Activated B cell treated with CpG ODN at 0.5 μM for 24 hours (primary cell): ENCODE measurements at regions of chr1 and their contacts with region 1.

Region 1: DNA sequence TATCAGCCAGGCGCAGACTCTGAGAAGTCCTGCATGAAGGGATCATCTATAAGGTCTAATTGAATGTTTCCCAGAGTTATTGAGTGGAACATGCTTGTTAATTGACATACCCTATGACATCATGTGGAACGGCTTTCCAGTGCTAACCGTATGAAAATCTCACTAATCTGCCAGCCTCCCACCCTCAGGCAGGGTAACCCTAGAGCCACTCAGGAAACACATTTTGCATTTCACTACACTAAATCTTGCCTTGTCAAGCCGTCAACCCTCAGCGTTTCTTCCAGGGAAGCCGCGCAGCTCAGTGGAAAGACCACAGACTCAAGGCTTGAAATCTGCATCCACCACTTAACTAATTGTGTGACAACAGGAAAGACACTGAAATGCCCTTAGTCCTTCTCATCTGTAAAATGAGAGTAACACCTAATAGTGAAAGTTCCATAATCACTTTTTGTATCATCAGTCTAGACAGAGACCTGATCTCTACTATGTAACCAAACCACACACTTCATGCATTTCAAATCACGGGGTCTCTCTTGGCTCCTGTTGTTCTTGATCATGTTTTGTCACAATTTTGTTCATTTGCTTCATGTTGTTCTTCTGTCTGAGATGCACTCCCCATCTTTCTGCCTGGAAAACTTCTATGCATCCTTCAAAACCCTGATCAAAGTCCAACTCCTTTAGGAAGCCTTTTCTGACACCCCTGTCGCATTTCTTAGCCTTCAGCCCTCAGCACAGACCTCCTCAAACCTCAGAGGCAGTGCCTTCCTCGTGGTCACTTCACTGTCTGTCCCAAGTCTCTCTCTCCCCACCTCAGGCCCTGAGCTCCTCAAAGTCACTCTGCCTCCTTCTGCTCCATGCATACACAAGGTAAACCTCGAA is 246.5 kb downstream of the TOMM20 start:
- DNase-seq: no peak
- ATAC-seq: peak; percentile 70
- H3K4me3 Mint-ChIP-seq: peak overlapping the region; percentile 75
- H3K27ac Mint-ChIP-seq: peak overlapping the region; percentile 82
- H3K4me1 Mint-ChIP-seq: peaks cover 46% of the 10 kb centered on the region
- H3K27me3 Mint-ChIP-seq: no peaks in the 10 kb centered on the region
- CTCF ChIP-seq: no peak

Region 2: DNA sequence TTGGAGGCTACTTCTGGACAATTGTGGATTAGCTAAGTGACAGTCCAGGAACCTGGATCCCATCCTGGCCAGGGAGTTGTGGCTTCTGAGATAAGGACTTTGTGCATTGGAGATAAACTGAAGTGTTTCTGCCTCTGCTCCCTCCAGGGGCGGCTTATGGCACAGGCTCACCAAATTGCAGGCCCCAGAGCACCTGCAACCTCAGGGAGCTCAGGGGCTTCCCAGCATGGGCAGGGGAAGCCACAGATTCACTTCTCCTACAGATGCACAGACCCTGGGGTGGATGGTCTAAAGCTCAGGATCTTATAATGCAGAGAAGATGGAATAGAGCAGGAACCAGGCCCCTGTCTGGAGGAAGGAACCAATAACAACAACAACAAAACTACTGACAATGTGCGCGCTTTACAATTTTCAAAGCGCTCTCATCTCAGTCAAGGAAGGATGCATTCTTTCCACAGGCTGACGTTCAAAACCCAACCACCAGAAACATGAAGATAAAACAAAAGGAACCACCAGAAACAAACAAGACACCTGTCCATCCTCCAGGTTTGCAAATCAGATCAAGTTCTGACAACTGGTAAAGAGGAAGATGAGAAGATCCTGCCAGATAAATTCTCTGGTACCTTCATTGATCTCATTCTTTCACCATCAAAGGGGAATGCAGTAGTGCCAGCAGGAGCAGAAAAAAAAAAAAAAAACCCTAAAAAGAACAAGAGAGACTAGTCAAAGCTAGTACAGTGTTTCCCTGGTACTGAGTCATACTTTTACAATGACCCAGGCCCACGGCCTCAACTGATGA is 151.2 kb before region 1 on chr1:
- CTCF ChIA-PET with region 1: no interaction called
- POLR2A ChIA-PET with region 1: interaction called, 6 read pairs
- intact Hi-C with region 1: loop called (anchors 5 kb)
- DNase-seq: peak; percentile 37
- ATAC-seq: peak; percentile 81
- H3K4me3 Mint-ChIP-seq: peak overlapping the region; percentile 44
- H3K27ac Mint-ChIP-seq: peak overlapping the region; percentile 79
- H3K4me1 Mint-ChIP-seq: peaks cover 46% of the 10 kb centered on the region
- H3K27me3 Mint-ChIP-seq: no peaks in the 10 kb centered on the region
- CTCF ChIP-seq: no peak

Region 3: GRCh38 chr1:234842726-234843641 is 39.1 kb before region 1 on chr1:
- CTCF ChIA-PET with region 1: no interaction called
- POLR2A ChIA-PET with region 1: interaction called, 16 read pairs
- intact Hi-C with region 1: loop called (anchors 5 kb)
- DNase-seq: peak; percentile 40
- ATAC-seq: peak; percentile 76
- H3K4me3 Mint-ChIP-seq: peak overlapping the region; percentile 62
- H3K27ac Mint-ChIP-seq: peak overlapping the region; percentile 71
- H3K4me1 Mint-ChIP-seq: peaks cover 52% of the 10 kb centered on the region
- H3K27me3 Mint-ChIP-seq: no peaks in the 10 kb centered on the region
- CTCF ChIP-seq: no peak

Region 4: GRCh38 chr1:234925440-234926263 is 43.5 kb after region 1 on chr1:
- CTCF ChIA-PET with region 1: no interaction called
- POLR2A ChIA-PET with region 1: interaction called, 3 read pairs
- intact Hi-C with region 1: loop called (anchors 2 kb)
- DNase-seq: no peak
- ATAC-seq: no peak
- H3K4me3 Mint-ChIP-seq: peak overlapping the region; percentile 78
- H3K27ac Mint-ChIP-seq: peak overlapping the region; percentile 78
- H3K4me1 Mint-ChIP-seq: peaks cover 30% of the 10 kb centered on the region
- H3K27me3 Mint-ChIP-seq: no peaks in the 10 kb centered on the region
- CTCF ChIP-seq: no peak

Region 5: GRCh38 chr1:234933475-234933874 is 51.3 kb after region 1 on chr1:
- CTCF ChIA-PET with region 1: no interaction called
- POLR2A ChIA-PET with region 1: interaction called, 4 read pairs
- intact Hi-C with region 1: loop called (anchors 1 kb)
- DNase-seq: no peak
- ATAC-seq: peak; percentile 86
- H3K4me3 Mint-ChIP-seq: peak overlapping the region; percentile 50
- H3K27ac Mint-ChIP-seq: peak overlapping the region; percentile 70
- H3K4me1 Mint-ChIP-seq: peaks cover 21% of the 10 kb centered on the region
- H3K27me3 Mint-ChIP-seq: no peaks in the 10 kb centered on the region
- CTCF ChIP-seq: no peak